ENCODE measurements at regions of chr3 and their contacts with region 1.

Region 1: GRCh38 chr3:138051946-138052802 is 42.2 kb downstream of the CLDN18 start:
- DNase-seq: peak; percentile 15
- H3K4me3 ChIP-seq: no peak overlapping the region
- H3K27ac ChIP-seq: no peak overlapping the region
- H3K27me3 ChIP-seq: no peaks in the 10 kb centered on the region
- CTCF ChIP-seq: peak; percentile 75

Region 2: GRCh38 chr3:137105277-137105977 is 946.7 kb before region 1 on chr3:
- CTCF ChIA-PET with region 1: interaction called, 23 read pairs
- POLR2A ChIA-PET with region 1: no interaction called
- DNase-seq: peak; percentile 30
- H3K4me3 ChIP-seq: no peak overlapping the region
- H3K27ac ChIP-seq: no peak overlapping the region
- H3K27me3 ChIP-seq: peaks cover 8% of the 10 kb centered on the region
- CTCF ChIP-seq: peak; percentile 71

Region 3: GRCh38 chr3:137110484-137110883 is 941.7 kb before region 1 on chr3:
- CTCF ChIA-PET with region 1: interaction called, 23 read pairs
- POLR2A ChIA-PET with region 1: no interaction called
- DNase-seq: no peak
- H3K4me3 ChIP-seq: no peak overlapping the region
- H3K27ac ChIP-seq: no peak overlapping the region
- H3K27me3 ChIP-seq: peaks cover 8% of the 10 kb centered on the region
- CTCF ChIP-seq: peak; percentile 88

Region 4: GRCh38 chr3:138032567-138032966 is 19.6 kb before region 1 on chr3:
- CTCF ChIA-PET with region 1: interaction called, 12 read pairs
- POLR2A ChIA-PET with region 1: no interaction called
- DNase-seq: no peak
- H3K4me3 ChIP-seq: no peak overlapping the region
- H3K27ac ChIP-seq: no peak overlapping the region
- H3K27me3 ChIP-seq: no peaks in the 10 kb centered on the region
- CTCF ChIP-seq: no peak